HCT116 (cell line): ENCODE measurements at regions of chr3 and their contacts with region 1.

Region 1: DNA sequence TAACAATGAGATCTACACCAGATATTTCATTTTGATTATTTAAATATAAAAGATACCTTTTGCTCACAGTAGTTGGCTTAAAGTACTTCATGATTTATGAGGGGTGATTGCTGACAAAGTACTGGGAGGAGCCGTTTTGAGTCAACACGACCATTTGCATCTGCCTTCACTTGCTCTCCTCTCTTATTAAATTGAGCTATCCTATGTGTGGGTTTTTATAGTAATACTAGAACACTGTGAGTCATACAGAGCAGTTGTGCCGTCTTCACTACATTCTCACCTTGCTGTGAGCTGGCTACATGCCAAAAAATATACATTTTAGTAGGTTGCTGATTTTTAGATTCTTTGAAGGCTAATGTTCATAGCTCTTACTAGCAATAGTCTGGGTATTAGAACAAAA is 161.2 kb downstream of the ALCAM start:
- DNase-seq: peak; percentile 40
- ATAC-seq: peak; percentile 90
- H3K4me3 ChIP-seq: no peak overlapping the region
- H3K27ac ChIP-seq: no peak overlapping the region
- H3K4me1 ChIP-seq: peaks cover 22 to 23% of the 10 kb centered on the region in 2 experiments
- H3K27me3 ChIP-seq: no peaks in the 10 kb centered on the region
- CTCF ChIP-seq: no peak
- POLR2A ChIP-seq: no peak
- RAD21 ChIP-seq: no peak

Region 2: DNA sequence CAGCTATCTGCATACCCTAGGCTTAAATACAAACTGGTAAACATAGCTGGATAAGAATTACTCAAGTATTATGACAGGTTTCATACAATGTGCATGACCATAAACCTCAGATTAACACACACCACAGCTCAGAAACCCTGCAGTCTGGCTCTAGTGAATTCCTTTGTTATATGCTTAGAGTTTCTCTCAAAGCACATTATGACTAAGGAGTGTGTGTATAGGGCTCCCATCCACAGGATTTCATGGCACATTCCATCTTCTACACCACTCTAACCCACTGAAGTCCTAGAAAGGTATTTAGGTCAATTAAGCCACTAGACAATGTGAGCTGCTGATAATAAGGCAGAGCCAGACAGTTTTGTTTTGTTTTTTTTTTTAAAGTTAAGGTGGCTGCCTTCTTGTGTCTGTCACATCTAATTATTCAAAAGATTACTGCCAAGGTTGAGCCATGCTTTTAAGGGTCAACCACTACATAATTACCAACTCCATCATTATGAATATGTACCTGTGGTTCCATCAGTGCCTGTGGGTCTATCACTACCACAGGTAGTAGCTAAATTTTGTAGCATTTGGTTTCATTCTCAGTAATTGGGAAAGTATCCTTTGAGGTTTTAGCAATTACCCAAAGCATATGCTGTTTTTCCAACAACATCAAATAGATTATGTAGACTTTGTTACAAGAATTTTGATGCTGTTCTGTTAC is 54.3 kb before region 1 on chr3:
- CTCF ChIA-PET with region 1: no interaction called
- POLR2A ChIA-PET with region 1: no interaction called
- RAD21 ChIA-PET with region 1: no interaction called
- intact Hi-C with region 1: loop called (anchors 1 kb)
- DNase-seq: no peak
- ATAC-seq: peak; percentile 14; the same call in 1 of the 2 replicates
- H3K4me3 ChIP-seq: no peak overlapping the region
- H3K27ac ChIP-seq: no peak overlapping the region
- H3K4me1 ChIP-seq: no peaks in the 10 kb centered on the region
- H3K27me3 ChIP-seq: no peaks in the 10 kb centered on the region
- CTCF ChIP-seq: no peak
- POLR2A ChIP-seq: no peak
- RAD21 ChIP-seq: no peak

Region 3: DNA sequence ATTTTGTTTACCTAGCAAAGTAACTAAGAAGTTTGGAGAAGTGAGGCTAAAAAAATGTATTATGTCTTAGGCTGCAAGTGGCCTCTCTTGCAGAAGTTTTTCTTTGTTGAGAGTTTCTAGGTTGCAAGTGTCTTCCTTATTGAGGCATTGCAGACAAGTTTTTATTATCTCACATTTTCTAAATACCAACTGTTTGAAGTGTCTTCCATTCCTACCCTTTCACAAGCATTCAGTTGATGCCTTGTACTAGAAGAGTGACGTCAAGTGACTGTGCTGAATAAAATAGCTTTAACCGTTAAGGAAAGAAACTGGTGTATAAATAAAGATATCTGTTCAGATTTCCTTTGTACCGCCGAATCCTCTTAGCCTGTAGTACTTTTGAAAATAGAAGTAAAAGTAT is 37.9 kb before region 1 on chr3:
- CTCF ChIA-PET with region 1: no interaction called
- POLR2A ChIA-PET with region 1: no interaction called
- RAD21 ChIA-PET with region 1: no interaction called
- intact Hi-C with region 1: no loop called
- DNase-seq: no peak
- ATAC-seq: no peak
- H3K4me3 ChIP-seq: no peak overlapping the region
- H3K27ac ChIP-seq: no peak overlapping the region
- H3K4me1 ChIP-seq: no peaks in the 10 kb centered on the region
- H3K27me3 ChIP-seq: no peaks in the 10 kb centered on the region
- CTCF ChIP-seq: no peak
- POLR2A ChIP-seq: no peak
- RAD21 ChIP-seq: no peak

Region 4: GRCh38 chr3:105672996-105673395 is 145.0 kb after region 1 on chr3:
- CTCF ChIA-PET with region 1: no interaction called
- POLR2A ChIA-PET with region 1: no interaction called
- RAD21 ChIA-PET with region 1: no interaction called
- intact Hi-C with region 1: no loop called
- DNase-seq: no peak
- ATAC-seq: no peak
- H3K4me3 ChIP-seq: no peak overlapping the region
- H3K27ac ChIP-seq: no peak overlapping the region
- H3K4me1 ChIP-seq: no peaks in the 10 kb centered on the region
- H3K27me3 ChIP-seq: no peaks in the 10 kb centered on the region
- CTCF ChIP-seq: no peak
- POLR2A ChIP-seq: no peak
- RAD21 ChIP-seq: no peak